Breast epithelium (tissue), 4 donors: ENCODE measurements at regions of chr21 and their contacts with region 1.

Region 1: GRCh38 chr21:17775431-17776126 is 43.6 kb downstream of the C21orf91 start:
- DNase-seq: no peak
- H3K4me3 ChIP-seq: no peak overlapping the region
- H3K27ac ChIP-seq: no peak overlapping the region
- H3K4me1 ChIP-seq: no peaks in the 10 kb centered on the region
- H3K27me3 ChIP-seq: no peaks in the 10 kb centered on the region
- CTCF ChIP-seq: no peak
- POLR2A ChIP-seq: no peak

Region 2: GRCh38 chr21:16046625-16047340 is 1728.8 kb before region 1 on chr21:
- intact Hi-C with region 1: loop called (anchors 5 kb)
- DNase-seq: no peak
- H3K4me3 ChIP-seq: no peak overlapping the region
- H3K27ac ChIP-seq: no peak overlapping the region
- H3K4me1 ChIP-seq: no peaks in the 10 kb centered on the region
- H3K27me3 ChIP-seq: no peaks in the 10 kb centered on the region
- CTCF ChIP-seq: no peak
- POLR2A ChIP-seq: no peak